ENCODE measurements at regions of chr14 and their contacts with region 1.

Region 1: DNA sequence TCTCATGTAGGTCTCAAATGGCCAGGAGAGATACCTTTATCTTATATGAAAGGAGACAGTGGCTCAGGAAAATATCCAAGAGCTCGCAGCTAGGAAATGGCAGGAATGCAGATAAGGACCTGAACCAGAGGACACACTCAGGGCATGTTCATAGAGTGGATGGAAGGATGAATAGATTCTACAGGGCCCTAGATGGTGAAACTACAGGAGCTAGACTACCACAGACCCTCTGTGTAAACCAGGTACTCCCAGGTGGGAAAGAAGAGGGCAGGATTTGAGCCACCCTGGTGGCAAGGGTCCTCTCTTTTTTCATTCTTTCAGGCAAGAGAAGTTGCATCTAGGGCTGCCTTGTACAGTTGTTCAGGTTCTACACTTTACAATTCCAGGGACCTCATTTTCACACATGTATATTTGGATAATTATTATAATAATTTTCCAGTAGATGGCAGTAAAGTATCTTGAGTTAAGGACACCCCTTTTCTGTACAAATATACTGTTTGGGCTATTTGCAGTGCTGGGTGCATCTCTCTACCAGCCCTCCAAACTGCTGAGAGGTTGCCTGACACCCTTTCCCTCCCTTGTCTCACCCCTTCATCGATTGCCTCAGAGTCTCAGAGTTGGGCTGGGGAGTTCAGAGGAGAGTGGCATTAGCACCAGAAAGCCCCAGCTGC is 10.5 kb upstream of the ZDHHC22 start:
- DNase-seq: no peak
- ATAC-seq: peak; percentile 45
- H3K4me3 Mint-ChIP-seq: no peak overlapping the region
- H3K27ac Mint-ChIP-seq: no peak overlapping the region
- H3K4me1 Mint-ChIP-seq: no peaks in the 10 kb centered on the region
- H3K27me3 Mint-ChIP-seq: peaks cover 33% of the 10 kb centered on the region
- CTCF ChIP-seq: no peak

Region 2: DNA sequence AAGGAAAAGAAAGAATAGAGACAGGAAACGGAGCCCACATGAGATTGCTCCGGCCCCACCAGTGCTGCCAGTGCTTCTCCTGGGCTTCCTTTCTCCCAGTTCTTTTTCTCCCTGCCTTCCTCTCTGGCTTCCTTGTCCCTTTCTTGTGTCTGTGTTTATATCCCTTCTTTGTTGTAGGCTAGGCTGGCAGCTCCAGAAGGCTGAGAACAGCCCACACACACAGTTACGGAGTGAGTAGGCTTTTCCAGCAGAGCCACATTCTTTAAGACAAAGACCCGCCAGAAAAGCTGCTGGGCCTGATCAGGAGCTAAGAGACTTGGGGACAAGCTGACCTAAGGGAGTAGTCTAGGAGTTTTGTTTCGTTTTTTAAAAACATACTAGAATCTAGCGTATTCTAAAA is 41.0 kb before region 1 on chr14:
- CTCF ChIA-PET with region 1: interaction called, 23 read pairs
- POLR2A ChIA-PET with region 1: no interaction called
- intact Hi-C with region 1: loop called (anchors 1 kb)
- DNase-seq: no peak
- ATAC-seq: no peak
- H3K4me3 Mint-ChIP-seq: no peak overlapping the region
- H3K27ac Mint-ChIP-seq: no peak overlapping the region
- H3K4me1 Mint-ChIP-seq: peaks cover 26% of the 10 kb centered on the region
- H3K27me3 Mint-ChIP-seq: no peaks in the 10 kb centered on the region
- CTCF ChIP-seq: no peak

Region 3: GRCh38 chr14:77314043-77314442 is 162.0 kb after region 1 on chr14:
- CTCF ChIA-PET with region 1: interaction called, 39 read pairs
- POLR2A ChIA-PET with region 1: no interaction called
- intact Hi-C with region 1: loop called (anchors 1 kb)
- DNase-seq: no peak
- ATAC-seq: no peak
- H3K4me3 Mint-ChIP-seq: no peak overlapping the region
- H3K27ac Mint-ChIP-seq: no peak overlapping the region
- H3K4me1 Mint-ChIP-seq: peaks cover 4% of the 10 kb centered on the region
- H3K27me3 Mint-ChIP-seq: no peaks in the 10 kb centered on the region
- CTCF ChIP-seq: no peak

Region 4: DNA sequence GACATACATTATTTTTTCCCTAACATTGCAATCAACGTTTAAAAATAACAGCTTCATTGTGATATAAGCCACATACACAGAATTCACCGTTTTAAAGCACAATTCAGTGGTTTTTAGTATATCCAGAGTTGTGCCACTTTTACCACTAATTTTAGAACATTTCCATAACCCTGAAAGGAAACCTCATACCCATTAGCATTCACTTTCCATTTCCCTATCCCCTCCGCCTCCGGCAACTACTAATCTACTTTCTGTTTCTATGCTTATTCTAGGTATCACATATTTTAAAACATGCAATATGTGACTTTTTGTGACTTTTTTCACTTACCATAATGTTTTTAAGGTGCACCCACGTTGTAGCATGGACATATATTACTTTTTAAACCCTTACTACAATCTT is 402.2 kb after region 1 on chr14:
- CTCF ChIA-PET with region 1: interaction called, 3 read pairs
- POLR2A ChIA-PET with region 1: no interaction called
- intact Hi-C with region 1: loop called (anchors 1 kb)
- DNase-seq: no peak
- ATAC-seq: no peak
- H3K4me3 Mint-ChIP-seq: no peak overlapping the region
- H3K27ac Mint-ChIP-seq: peak overlapping the region; percentile 43
- H3K4me1 Mint-ChIP-seq: no peaks in the 10 kb centered on the region
- H3K27me3 Mint-ChIP-seq: no peaks in the 10 kb centered on the region
- CTCF ChIP-seq: no peak

Region 5: GRCh38 chr14:78598041-78598920 is 1446.2 kb after region 1 on chr14:
- CTCF ChIA-PET with region 1: no interaction called
- POLR2A ChIA-PET with region 1: no interaction called
- intact Hi-C with region 1: loop called (anchors 5 kb)
- DNase-seq: peak; percentile 16
- ATAC-seq: peak; percentile 52
- H3K4me3 Mint-ChIP-seq: no peak overlapping the region
- H3K27ac Mint-ChIP-seq: no peak overlapping the region
- H3K4me1 Mint-ChIP-seq: no peaks in the 10 kb centered on the region
- H3K27me3 Mint-ChIP-seq: peaks cover 1% of the 10 kb centered on the region
- CTCF ChIP-seq: peak; percentile 43

Measured in activated B cell treated with CpG ODN at 0.5 μM for 24 hours (primary cell).